PC-9 (cell line): ENCODE measurements at regions of chr1 and their contacts with region 1.

Region 1: DNA sequence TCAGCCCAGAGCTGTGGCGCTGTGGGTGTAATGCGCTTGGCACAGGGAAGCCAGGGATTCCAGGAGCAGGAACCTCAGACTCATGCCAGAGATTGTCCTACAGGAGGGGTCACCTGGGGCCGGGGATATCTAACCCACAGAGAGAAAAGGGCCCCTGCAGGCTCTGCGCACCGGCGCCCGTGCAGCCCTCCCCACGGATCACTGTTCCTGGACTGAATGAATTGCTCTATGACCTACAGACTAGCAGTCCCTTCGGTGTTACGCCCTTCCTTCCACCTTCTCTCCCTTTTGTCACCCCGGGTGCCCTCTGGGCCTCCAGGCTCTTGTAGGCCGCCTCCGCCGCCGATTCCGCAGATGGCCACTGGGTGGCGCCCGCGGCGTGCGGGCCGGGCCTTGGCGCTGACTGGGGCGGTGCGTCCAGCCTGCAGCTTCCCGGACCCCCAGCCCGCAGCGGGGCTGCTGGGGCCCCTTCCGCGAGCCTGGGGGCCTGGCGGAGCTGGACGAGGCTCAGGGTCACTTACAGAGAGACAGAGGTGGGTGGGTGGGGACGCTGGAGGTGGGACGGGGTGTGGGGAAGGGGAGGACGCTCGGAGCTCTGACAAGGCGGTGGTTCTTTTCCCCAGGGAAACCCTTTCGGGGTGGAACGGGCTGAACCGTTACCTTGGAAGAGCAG is 101.3 kb downstream of the IER5 start:
- DNase-seq: peak in 1 of 2 experiments; percentile 70
- H3K4me3 ChIP-seq: no peak overlapping the region
- H3K27ac ChIP-seq: no peak overlapping the region
- H3K4me1 ChIP-seq: no peaks in the 10 kb centered on the region
- H3K27me3 ChIP-seq: peaks cover 43% of the 10 kb centered on the region
- CTCF ChIP-seq: peak; percentile 95

Region 2: DNA sequence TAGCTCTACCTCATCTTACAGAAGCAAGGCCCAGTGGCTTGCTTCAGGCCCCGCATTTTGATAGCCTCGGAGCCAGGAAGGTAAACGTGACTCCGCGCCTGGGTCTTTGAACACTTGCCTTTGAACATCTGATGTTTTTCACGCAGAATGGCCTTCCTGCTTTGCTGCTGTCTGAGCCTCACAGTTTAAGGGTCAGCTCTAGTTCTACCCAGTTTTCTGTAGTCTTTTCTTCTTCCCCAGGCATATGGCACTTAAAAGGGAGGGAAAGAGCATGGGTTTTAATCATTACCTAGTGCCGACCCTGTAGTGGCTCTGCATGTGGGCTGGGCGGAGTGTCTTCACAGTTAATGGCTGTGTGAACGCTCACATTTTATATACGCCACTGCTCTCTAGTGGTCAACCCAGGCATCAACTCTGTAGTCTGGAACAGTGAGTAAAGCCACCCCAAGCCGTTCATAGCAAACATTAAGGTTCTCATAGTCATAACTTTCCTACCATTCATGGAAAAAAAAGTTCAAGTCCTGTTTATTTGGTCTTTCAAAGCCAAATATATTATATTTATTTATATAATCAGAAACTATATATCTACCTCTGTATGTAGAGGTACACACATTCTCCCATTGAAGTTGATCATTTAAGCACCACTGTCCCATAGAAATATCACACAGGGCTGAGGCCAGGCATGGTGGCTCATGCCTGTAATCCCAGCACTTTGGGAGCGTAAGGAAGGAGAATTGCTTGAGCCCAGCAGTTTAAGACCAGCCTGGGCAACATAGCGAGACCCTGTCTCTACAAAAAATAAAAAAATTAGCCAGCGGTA is 23.2 kb before region 1 on chr1:
- CTCF ChIA-PET with region 1: no interaction called
- POLR2A ChIA-PET with region 1: no interaction called
- intact Hi-C with region 1: no loop called
- DNase-seq: peak; percentile 58 to 62
- H3K4me3 ChIP-seq: no peak overlapping the region
- H3K27ac ChIP-seq: no peak overlapping the region
- H3K4me1 ChIP-seq: no peaks in the 10 kb centered on the region
- H3K27me3 ChIP-seq: no peaks in the 10 kb centered on the region
- CTCF ChIP-seq: peak; percentile 88

Region 3: DNA sequence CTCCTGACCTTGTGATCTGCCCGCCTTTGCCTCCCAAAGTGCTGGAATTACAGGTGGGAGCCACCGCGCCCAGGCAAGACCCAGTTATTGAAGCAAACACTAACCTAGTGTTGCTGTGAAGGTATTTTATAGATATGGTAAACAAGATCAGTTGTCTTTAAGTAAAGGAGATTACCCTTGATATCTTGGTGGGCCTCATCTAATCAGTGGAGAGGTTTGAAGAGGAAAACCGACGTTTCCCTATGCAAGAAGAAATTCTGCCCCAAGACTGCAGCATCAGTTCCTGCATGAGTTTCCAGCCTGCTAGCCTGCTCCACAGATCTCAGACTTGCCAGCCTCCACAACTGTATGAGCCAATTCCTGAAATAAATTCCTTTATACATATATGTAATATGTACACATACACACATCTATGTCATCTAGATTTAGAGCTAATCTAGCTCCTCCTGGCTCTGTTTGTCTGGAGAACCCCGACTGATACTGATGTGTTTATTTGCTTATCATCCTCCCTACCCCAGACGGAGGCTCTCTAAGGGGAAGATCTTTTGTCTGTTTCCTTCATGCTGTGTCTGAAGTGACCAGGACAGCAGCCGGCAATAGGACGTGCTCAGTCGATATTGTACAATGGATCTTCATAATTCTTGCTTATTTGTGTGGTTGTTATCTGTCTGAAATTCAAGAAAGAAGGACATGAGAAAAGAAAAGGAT is 10.4 kb before region 1 on chr1:
- CTCF ChIA-PET with region 1: no interaction called
- POLR2A ChIA-PET with region 1: no interaction called
- intact Hi-C with region 1: no loop called
- DNase-seq: no peak
- H3K4me3 ChIP-seq: no peak overlapping the region
- H3K27ac ChIP-seq: no peak overlapping the region
- H3K4me1 ChIP-seq: no peaks in the 10 kb centered on the region
- H3K27me3 ChIP-seq: peaks cover 31% of the 10 kb centered on the region
- CTCF ChIP-seq: no peak

Region 4: DNA sequence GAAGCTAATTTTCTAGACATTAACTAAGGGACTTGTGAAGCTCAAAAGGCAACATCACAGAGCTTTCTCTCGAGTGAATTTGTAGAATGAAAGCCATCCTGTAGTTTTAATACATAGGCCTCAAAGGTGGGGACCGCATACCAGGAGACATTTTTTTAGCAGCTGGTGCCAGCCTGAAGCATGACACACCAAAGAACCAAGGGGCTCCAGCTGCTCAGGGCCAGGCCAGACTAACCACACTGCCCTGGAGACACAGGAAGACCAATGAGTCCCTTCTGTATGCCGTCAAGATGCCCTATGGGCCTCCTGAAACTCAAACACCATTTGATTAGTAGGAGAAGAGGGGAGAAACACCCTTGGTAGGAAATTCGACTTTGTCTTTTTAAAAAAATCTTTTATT is 179.6 kb after region 1 on chr1:
- CTCF ChIA-PET with region 1: no interaction called
- POLR2A ChIA-PET with region 1: no interaction called
- intact Hi-C with region 1: no loop called
- DNase-seq: no peak
- H3K4me3 ChIP-seq: no peak overlapping the region
- H3K27ac ChIP-seq: no peak overlapping the region
- H3K4me1 ChIP-seq: no peaks in the 10 kb centered on the region
- H3K27me3 ChIP-seq: peaks cover 5% of the 10 kb centered on the region; the same call in 1 of the 2 replicates
- CTCF ChIP-seq: no peak

Region 5: DNA sequence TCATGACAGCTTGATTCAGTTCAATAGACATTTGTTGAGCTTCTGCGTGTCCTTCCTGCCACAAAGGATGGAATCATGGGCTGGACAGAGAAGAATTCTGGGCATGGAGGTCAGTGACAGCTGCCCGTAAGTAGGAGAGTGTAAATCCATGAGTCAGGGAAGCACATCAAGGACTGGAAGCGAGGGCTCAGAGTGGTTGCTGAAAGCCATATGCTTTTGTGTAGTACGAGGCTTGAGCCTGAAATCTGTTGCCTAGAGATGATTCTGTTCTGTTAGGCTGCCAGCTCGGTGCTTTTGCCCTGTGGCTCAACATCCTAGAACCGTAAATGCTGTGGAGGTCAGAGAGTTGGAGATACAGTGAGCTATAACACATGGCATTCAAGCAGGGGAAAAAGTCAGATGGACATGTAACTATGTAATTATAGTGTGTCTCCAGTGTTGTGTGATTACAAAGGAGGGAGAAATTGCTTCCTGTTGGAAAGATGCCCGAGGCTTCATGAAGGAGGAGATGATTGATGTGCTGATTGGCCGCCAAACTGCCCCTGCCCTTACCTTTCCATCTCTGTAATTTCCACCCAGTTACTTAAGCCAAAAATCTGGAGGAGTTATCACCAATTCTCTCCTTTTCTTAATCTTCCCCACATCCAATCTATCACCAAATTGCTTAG is 200.7 kb after region 1 on chr1:
- CTCF ChIA-PET with region 1: no interaction called
- POLR2A ChIA-PET with region 1: no interaction called
- intact Hi-C with region 1: no loop called
- DNase-seq: no peak
- H3K4me3 ChIP-seq: no peak overlapping the region
- H3K27ac ChIP-seq: no peak overlapping the region
- H3K4me1 ChIP-seq: no peaks in the 10 kb centered on the region
- H3K27me3 ChIP-seq: peaks cover 63% of the 10 kb centered on the region
- CTCF ChIP-seq: no peak

Region 6: DNA sequence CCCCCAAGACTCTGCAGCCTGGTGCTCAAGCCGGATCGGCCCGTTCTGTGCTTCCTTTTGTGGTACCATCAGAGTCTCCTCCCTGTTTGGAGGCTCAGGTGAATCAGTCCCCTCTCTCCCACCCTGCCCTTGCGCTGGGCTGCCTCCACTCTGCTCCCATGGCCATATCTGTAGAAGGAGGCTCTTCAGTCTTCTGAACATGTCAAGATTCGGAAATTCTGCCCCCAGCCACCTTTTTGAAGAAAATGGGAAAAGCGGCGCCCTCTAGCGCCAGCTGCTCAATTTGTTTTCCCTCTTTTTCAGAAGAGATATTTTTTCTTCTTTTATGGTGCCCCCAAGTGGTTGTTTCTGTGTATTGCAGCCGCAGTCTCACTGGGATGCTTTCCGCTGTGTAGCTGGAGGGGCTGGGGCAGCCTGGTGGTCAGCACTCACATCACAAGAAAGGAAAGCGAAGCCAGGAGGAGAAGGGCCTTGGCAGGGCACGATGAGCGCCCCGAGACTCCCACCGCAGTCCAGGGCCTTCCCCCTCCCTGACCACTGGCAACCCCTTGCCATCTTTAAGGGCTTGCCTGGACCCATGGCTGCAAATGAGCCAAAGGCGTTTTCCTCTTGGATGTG is 235.1 kb after region 1 on chr1:
- CTCF ChIA-PET with region 1: interaction called, 3 read pairs
- POLR2A ChIA-PET with region 1: no interaction called
- intact Hi-C with region 1: loop called (anchors 1 kb)
- DNase-seq: peak; percentile 37 to 60
- H3K4me3 ChIP-seq: no peak overlapping the region
- H3K27ac ChIP-seq: no peak overlapping the region
- H3K4me1 ChIP-seq: no peaks in the 10 kb centered on the region
- H3K27me3 ChIP-seq: peaks cover 15% of the 10 kb centered on the region; the same call in 1 of the 2 replicates
- CTCF ChIP-seq: peak; percentile 98